H1 (cell line): ENCODE measurements at regions of chr9 and their contacts with region 1.

Region 1: GRCh38 chr9:133467101-133467500 is 7.3 kb downstream of the CACFD1 start:
- DNase-seq: no peak
- H3K4me3 ChIP-seq: no peak overlapping the region
- H3K27ac ChIP-seq: no peak overlapping the region
- H3K4me1 ChIP-seq: peaks cover 0 to 3% (median 0%) of the 10 kb centered on the region in 4 experiments; a peak in 2 of 7 replicates
- H3K27me3 ChIP-seq: no peaks in the 10 kb centered on the region
- CTCF ChIP-seq: peak in 2 of 3 experiments; percentile 33 to 52; a peak in 2 of 4 replicates
- EP300 ChIP-seq: no peak
- POLR2A ChIP-seq: no peak
- RAD21 ChIP-seq: peak in 1 of 2 experiments; percentile 27; a peak in 1 of 4 replicates

Region 2: GRCh38 chr9:133347985-133348717 is 119.0 kb before region 1 on chr9 and contains the starts of genes MED22 and RPL7A:
- CTCF ChIA-PET with region 1: no interaction called
- POLR2A ChIA-PET with region 1: interaction called, 13 read pairs
- DNase-seq: peak; percentile 77 to 93
- H3K4me3 ChIP-seq: peak within 1 kb of the TSS; percentile 93 to 100 (median 96)
- H3K27ac ChIP-seq: peak within 1 kb of the TSS; percentile 99
- H3K4me1 ChIP-seq: peaks cover 0 to 10% (median 7%) of the 10 kb centered on the region in 4 experiments; a peak in 6 of 7 replicates
- H3K27me3 ChIP-seq: no peaks in the 10 kb centered on the region
- CTCF ChIP-seq: no peak
- EP300 ChIP-seq: no peak
- POLR2A ChIP-seq: peak in 1 of 2 experiments; percentile 97; a peak in 1 of 3 replicates
- RAD21 ChIP-seq: no peak
- total RNA-seq, gene MED22: 56.4 and 61.8 TPM in 2 replicates
- total RNA-seq, gene RPL7A: 2,578 and 2,633 TPM in 2 replicates

Region 3: GRCh38 chr9:133478851-133479711 is 12.0 kb after region 1 on chr9 and contains the start of gene SLC2A6:
- CTCF ChIA-PET with region 1: interaction called, 13 read pairs
- POLR2A ChIA-PET with region 1: interaction called, 19 read pairs
- DNase-seq: peak; percentile 74 to 94
- H3K4me3 ChIP-seq: peak within 1 kb of the TSS; percentile 57 to 81 (median 60)
- H3K27ac ChIP-seq: no peak within 1 kb of the TSS
- H3K4me1 ChIP-seq: peaks cover 0 to 7% (median 4%) of the 10 kb centered on the region in 4 experiments; a peak in 6 of 7 replicates
- H3K27me3 ChIP-seq: peaks cover 0 to 4% (median 0%) of the 10 kb centered on the region in 4 experiments; a peak in 2 of 7 replicates
- CTCF ChIP-seq: no peak
- EP300 ChIP-seq: no peak
- POLR2A ChIP-seq: peak in 1 of 2 experiments; percentile 71; a peak in 2 of 3 replicates
- RAD21 ChIP-seq: no peak
- total RNA-seq, gene SLC2A6: 16.6 and 17.9 TPM in 2 replicates